CD4-positive, alpha-beta memory T cell (primary cell): ENCODE measurements at regions of chr15 and their contacts with region 1.

Region 1: GRCh38 chr15:79853458-79854328 is 43.1 kb downstream of the MTHFS start:
- DNase-seq: peak; percentile 41 to 50 (median 46)
- H3K4me3 ChIP-seq: no peak overlapping the region
- H3K4me3 Mint-ChIP-seq: no peak overlapping the region
- H3K27ac ChIP-seq: no peak overlapping the region
- H3K27ac Mint-ChIP-seq: peak overlapping the region in 2 of 7 donors; percentile 18 to 39
- H3K4me1 ChIP-seq: peaks cover 5% of the 10 kb centered on the region
- H3K4me1 Mint-ChIP-seq: peaks cover 10 to 31% (median 16%) of the 10 kb centered on the region in 4 donors
- H3K27me3 ChIP-seq: no peaks in the 10 kb centered on the region
- H3K27me3 Mint-ChIP-seq: no peaks in the 10 kb centered on the region

Region 2: DNA sequence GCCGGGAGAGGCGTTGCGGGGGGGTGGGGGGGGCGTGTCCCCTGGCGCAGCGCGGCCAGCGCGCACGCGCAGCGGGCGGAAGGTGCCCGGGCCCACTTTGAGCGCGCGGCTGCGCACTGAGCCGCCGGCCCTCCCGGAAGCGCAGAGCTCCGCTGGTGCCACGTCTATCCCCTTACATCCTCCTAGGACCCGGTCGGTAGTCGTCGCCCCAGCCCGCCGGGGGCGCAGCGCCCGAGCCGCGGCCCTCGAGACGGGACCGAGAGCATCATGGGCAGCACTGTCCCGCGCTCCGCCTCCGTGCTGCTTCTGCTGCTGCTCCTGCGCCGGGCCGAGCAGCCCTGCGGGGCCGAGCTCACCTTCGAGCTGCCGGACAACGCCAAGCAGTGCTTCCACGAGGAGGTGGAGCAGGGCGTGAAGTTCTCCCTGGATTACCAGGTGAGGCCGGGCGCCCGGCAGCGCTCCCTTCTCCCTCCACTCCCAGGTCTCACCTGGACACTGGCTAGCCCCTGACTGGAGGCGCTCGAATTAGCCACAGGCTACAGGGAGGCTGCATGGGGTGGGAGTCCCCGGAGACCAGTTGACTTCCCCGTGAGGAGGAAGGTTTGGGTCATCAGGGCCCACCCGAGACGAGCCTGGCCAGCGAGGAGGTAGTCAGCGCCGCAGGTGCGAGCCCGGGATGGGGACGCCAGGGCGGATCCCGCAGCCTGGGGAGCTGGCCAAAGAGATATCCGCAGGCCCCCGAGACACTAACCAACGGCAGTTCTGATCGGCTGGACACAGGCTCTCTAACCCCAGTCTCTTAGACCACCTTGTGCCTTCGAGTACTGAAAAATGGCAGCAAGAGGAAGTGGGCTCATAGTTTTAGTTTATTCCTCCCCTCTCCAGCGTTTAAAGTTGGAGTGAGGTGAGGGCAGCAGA is 542.5 kb before region 1 on chr15 and contains the start of gene TMED3:
- CTCF ChIA-PET with region 1: no interaction called
- POLR2A ChIA-PET with region 1: no interaction called
- intact Hi-C with region 1: no loop called
- DNase-seq: peak; percentile 75 to 82 (median 77)
- H3K4me3 ChIP-seq: peak within 1 kb of the TSS; percentile 45 to 84
- H3K4me3 Mint-ChIP-seq: peak within 1 kb of the TSS; percentile 88 to 96 (median 91)
- H3K27ac ChIP-seq: peak within 1 kb of the TSS; percentile 45
- H3K27ac Mint-ChIP-seq: peak within 1 kb of the TSS; percentile 13 to 83 (median 74)
- H3K4me1 ChIP-seq: peaks cover 25% of the 10 kb centered on the region
- H3K4me1 Mint-ChIP-seq: peaks cover 21 to 45% (median 36%) of the 10 kb centered on the region in 4 donors
- H3K27me3 ChIP-seq: no peaks in the 10 kb centered on the region
- H3K27me3 Mint-ChIP-seq: peaks cover 7 to 9% of the 10 kb centered on the region in 2 donors
- total RNA-seq, gene TMED3: 20.2 to 20.8 TPM

Region 3: GRCh38 chr15:79339564-79340314 is 514.0 kb before region 1 on chr15:
- CTCF ChIA-PET with region 1: interaction called, 4 read pairs
- POLR2A ChIA-PET with region 1: no interaction called
- intact Hi-C with region 1: loop called (anchors 1 kb)
- DNase-seq: peak in 1 of 5 donors; percentile 6
- H3K4me3 ChIP-seq: no peak overlapping the region
- H3K4me3 Mint-ChIP-seq: no peak overlapping the region
- H3K27ac ChIP-seq: no peak overlapping the region
- H3K27ac Mint-ChIP-seq: no peak overlapping the region
- H3K4me1 ChIP-seq: no peaks in the 10 kb centered on the region
- H3K4me1 Mint-ChIP-seq: peaks cover 0 to 4% (median 0%) of the 10 kb centered on the region in 4 donors
- H3K27me3 ChIP-seq: no peaks in the 10 kb centered on the region
- H3K27me3 Mint-ChIP-seq: no peaks in the 10 kb centered on the region

Region 4: GRCh38 chr15:79673416-79674123 is 180.1 kb before region 1 on chr15:
- CTCF ChIA-PET with region 1: no interaction called
- POLR2A ChIA-PET with region 1: no interaction called
- intact Hi-C with region 1: no loop called
- DNase-seq: no peak
- H3K4me3 ChIP-seq: no peak overlapping the region
- H3K4me3 Mint-ChIP-seq: no peak overlapping the region
- H3K27ac ChIP-seq: no peak overlapping the region
- H3K27ac Mint-ChIP-seq: no peak overlapping the region
- H3K4me1 ChIP-seq: no peaks in the 10 kb centered on the region
- H3K4me1 Mint-ChIP-seq: no peaks in the 10 kb centered on the region
- H3K27me3 ChIP-seq: peaks cover 5% of the 10 kb centered on the region
- H3K27me3 Mint-ChIP-seq: peaks cover 13 to 17% of the 10 kb centered on the region in 2 donors

Region 5: GRCh38 chr15:79831604-79832003 is 22.1 kb before region 1 on chr15:
- CTCF ChIA-PET with region 1: interaction called, 11 read pairs
- POLR2A ChIA-PET with region 1: no interaction called
- intact Hi-C with region 1: no loop called
- DNase-seq: no peak
- H3K4me3 ChIP-seq: no peak overlapping the region
- H3K4me3 Mint-ChIP-seq: no peak overlapping the region
- H3K27ac ChIP-seq: no peak overlapping the region
- H3K27ac Mint-ChIP-seq: no peak overlapping the region
- H3K4me1 ChIP-seq: no peaks in the 10 kb centered on the region
- H3K4me1 Mint-ChIP-seq: peaks cover 0 to 3% (median 2%) of the 10 kb centered on the region in 4 donors
- H3K27me3 ChIP-seq: no peaks in the 10 kb centered on the region
- H3K27me3 Mint-ChIP-seq: no peaks in the 10 kb centered on the region

Region 6: GRCh38 chr15:79872358-79873017 is 18.8 kb after region 1 on chr15:
- CTCF ChIA-PET with region 1: interaction called, 74 read pairs
- POLR2A ChIA-PET with region 1: no interaction called
- intact Hi-C with region 1: no loop called
- DNase-seq: peak; percentile 37 to 87 (median 55)
- H3K4me3 ChIP-seq: no peak overlapping the region
- H3K4me3 Mint-ChIP-seq: peak overlapping the region in 6 of 8 donors; percentile 17 to 72 (median 44)
- H3K27ac ChIP-seq: no peak overlapping the region
- H3K27ac Mint-ChIP-seq: peak overlapping the region; percentile 65 to 89 (median 81)
- H3K4me1 ChIP-seq: peaks cover 11% of the 10 kb centered on the region
- H3K4me1 Mint-ChIP-seq: peaks cover 18 to 24% (median 20%) of the 10 kb centered on the region in 4 donors
- H3K27me3 ChIP-seq: no peaks in the 10 kb centered on the region
- H3K27me3 Mint-ChIP-seq: no peaks in the 10 kb centered on the region

Region 7: GRCh38 chr15:79989682-79990081 is 136.0 kb after region 1 on chr15:
- CTCF ChIA-PET with region 1: interaction called, 65 read pairs
- POLR2A ChIA-PET with region 1: no interaction called
- intact Hi-C with region 1: loop called (anchors 1 kb)
- DNase-seq: no peak
- H3K4me3 ChIP-seq: no peak overlapping the region
- H3K4me3 Mint-ChIP-seq: no peak overlapping the region
- H3K27ac ChIP-seq: no peak overlapping the region
- H3K27ac Mint-ChIP-seq: peak overlapping the region in 1 of 7 donors; percentile 45
- H3K4me1 ChIP-seq: no peaks in the 10 kb centered on the region
- H3K4me1 Mint-ChIP-seq: peaks cover 0 to 5% (median 3%) of the 10 kb centered on the region in 4 donors
- H3K27me3 ChIP-seq: no peaks in the 10 kb centered on the region
- H3K27me3 Mint-ChIP-seq: no peaks in the 10 kb centered on the region